ENCODE measurements at regions of chr4 and their contacts with region 1.

Region 1: GRCh38 chr4:27916452-27917184 is 1056.0 kb downstream of the STIM2 start:
- DNase-seq: no peak
- ATAC-seq: peak in 4 of 8 donors; percentile 38 to 82 (median 51)
- H3K4me3 ChIP-seq: no peak overlapping the region
- H3K27ac ChIP-seq: peak overlapping the region in 2 of 10 donors; percentile 2 to 9
- H3K4me1 ChIP-seq: peaks cover 0 to 27% (median 7%) of the 10 kb centered on the region in 9 donors
- H3K27me3 ChIP-seq: no peaks in the 10 kb centered on the region
- CTCF ChIP-seq: no peak

Region 2: GRCh38 chr4:27524224-27524623 is 392.4 kb before region 1 on chr4:
- intact Hi-C with region 1: no loop called
- DNase-seq: no peak
- ATAC-seq: no peak
- H3K4me3 ChIP-seq: no peak overlapping the region
- H3K27ac ChIP-seq: no peak overlapping the region
- H3K4me1 ChIP-seq: no peaks in the 10 kb centered on the region
- H3K27me3 ChIP-seq: no peaks in the 10 kb centered on the region
- CTCF ChIP-seq: no peak

Region 3: GRCh38 chr4:27861381-27862201 is 55.0 kb before region 1 on chr4:
- intact Hi-C with region 1: no loop called
- DNase-seq: peak in 1 of 2 donors; percentile 4
- ATAC-seq: peak in 4 of 8 donors; percentile 42 to 81 (median 52)
- H3K4me3 ChIP-seq: no peak overlapping the region
- H3K27ac ChIP-seq: no peak overlapping the region
- H3K4me1 ChIP-seq: no peaks in the 10 kb centered on the region
- H3K27me3 ChIP-seq: no peaks in the 10 kb centered on the region
- CTCF ChIP-seq: peak; percentile 17 to 63 (median 55)

Region 4: DNA sequence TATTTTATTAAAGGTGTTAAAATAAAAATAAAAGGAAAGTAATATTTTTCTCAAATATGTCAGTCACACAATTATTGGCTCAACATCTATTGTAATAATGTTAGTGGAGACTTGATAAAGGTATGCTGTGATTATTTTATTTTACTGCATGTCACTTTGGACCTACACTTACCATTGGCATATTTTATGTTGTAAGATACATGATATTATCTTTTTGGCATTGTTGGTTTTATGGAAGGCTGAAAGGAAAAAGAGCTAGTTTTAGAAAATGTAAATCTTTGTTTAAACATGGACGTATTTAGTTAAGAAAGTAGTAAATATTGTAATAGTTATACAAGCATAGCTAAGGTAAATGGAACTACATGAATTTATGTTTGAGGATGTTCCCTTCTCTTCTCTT is 343.3 kb after region 1 on chr4:
- intact Hi-C with region 1: no loop called
- DNase-seq: no peak
- ATAC-seq: no peak
- H3K4me3 ChIP-seq: no peak overlapping the region
- H3K27ac ChIP-seq: no peak overlapping the region
- H3K4me1 ChIP-seq: no peaks in the 10 kb centered on the region
- H3K27me3 ChIP-seq: no peaks in the 10 kb centered on the region
- CTCF ChIP-seq: no peak

Region 5: GRCh38 chr4:28730304-28730703 is 813.7 kb after region 1 on chr4:
- intact Hi-C with region 1: loop called in 1 of 10 experiments (anchors 10 kb)
- DNase-seq: no peak
- ATAC-seq: no peak
- H3K4me3 ChIP-seq: no peak overlapping the region
- H3K27ac ChIP-seq: no peak overlapping the region
- H3K4me1 ChIP-seq: no peaks in the 10 kb centered on the region
- H3K27me3 ChIP-seq: no peaks in the 10 kb centered on the region
- CTCF ChIP-seq: no peak

Measured in heart right ventricle (tissue), 16 donors.